ENCODE measurements at regions of chr20 and their contacts with region 1.

Region 1: DNA sequence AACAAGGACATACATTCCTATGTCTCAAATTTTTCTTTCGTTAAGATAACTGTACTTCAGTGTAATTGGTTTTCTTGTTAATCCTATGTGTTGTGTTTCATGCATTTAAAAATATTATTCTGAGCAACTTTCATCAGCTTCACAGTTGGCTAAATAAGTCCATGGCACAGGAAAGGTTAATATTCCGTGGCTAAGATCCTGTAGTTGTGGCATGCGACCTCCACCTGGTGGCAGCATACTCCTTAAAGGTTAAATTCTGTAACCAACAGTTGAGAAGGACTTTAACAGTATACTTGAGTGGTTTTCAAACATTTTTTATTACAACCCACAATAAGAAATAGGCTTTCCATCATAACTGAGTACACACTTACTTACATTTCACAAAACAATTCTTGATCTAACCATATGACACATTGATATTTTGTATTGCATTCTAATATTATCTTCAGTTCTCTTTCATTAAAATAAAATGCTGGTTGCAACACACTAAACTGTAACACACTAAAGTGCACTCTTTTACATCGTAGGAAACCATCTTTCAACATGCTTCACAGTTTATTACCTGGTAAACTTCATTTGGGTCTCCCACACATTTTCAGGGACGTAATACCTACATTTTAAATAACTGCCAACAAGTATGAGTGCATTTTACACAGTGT is 118.3 kb downstream of the SLX4IP start:
- DNase-seq: peak; percentile 55
- H3K4me3 ChIP-seq: no peak overlapping the region
- H3K27ac ChIP-seq: no peak overlapping the region
- H3K4me1 ChIP-seq: no peaks in the 10 kb centered on the region
- CTCF ChIP-seq: peak; percentile 92

Region 2: DNA sequence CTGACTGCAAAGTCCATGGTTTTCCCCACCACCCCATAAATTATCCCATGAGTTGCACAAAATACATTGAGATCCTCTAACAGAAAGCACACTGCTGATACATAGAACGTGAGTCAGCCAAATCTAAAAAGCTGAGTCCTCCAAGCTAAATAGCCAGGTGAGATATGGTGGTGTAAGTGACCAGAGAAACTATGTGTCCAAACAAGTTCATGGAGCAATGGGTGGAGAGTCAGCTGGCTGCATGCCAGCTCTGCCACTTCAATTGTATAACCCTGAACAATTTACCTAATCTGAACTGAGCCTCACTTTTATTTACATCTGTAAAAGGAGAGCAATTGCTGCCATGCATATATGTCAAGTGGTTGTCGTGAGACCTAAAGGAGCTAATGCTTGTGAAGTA is 325.1 kb before region 1 on chr20:
- CTCF ChIA-PET with region 1: no interaction called
- POLR2A ChIA-PET with region 1: no interaction called
- intact Hi-C with region 1: no loop called
- DNase-seq: no peak
- H3K4me3 ChIP-seq: no peak overlapping the region
- H3K27ac ChIP-seq: no peak overlapping the region
- H3K4me1 ChIP-seq: no peaks in the 10 kb centered on the region
- CTCF ChIP-seq: no peak

Region 3: GRCh38 chr20:10970109-10970508 is 416.7 kb after region 1 on chr20:
- CTCF ChIA-PET with region 1: no interaction called
- POLR2A ChIA-PET with region 1: no interaction called
- intact Hi-C with region 1: no loop called
- DNase-seq: no peak
- H3K4me3 ChIP-seq: no peak overlapping the region
- H3K27ac ChIP-seq: no peak overlapping the region
- H3K4me1 ChIP-seq: no peaks in the 10 kb centered on the region
- CTCF ChIP-seq: no peak

Region 4: DNA sequence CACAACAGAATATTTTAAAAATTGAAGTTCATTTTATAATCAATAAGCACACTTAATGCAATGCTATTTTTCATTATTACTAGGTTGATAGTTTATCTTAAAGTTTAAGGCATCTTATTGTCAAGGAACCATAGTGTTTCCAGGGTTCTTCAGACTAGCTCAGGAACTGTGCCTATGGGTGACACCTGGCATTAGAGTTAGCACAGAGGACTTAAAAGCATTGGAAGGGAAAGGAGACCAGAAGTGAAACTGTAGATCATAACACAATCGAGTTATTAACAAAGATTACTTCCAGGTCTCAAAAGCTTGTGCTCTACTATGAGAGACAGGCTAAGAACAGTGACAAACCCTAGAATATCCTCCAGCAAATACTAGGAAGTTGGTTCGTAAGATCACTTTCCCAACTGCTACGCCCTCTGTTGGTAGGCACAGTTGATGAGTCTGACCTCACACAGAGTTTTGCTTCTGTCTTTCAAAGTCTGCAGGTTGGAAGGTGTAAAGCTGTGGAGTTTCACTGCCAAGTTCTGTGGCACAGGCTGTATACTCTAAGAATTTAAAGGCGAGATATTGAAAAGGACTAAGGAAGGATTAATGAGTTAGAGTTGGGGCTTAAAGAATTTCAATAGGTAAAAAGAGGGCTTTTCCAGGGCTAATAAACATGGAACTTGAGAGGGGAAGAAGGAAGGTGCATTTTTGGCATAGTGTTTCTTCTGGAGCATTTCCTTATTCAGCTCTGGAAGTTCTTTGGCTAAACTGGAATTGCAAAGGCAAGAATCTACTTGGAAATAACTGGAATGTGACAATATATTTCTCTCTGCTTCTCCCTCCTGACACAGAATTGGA is 651.7 kb after region 1 on chr20:
- CTCF ChIA-PET with region 1: no interaction called
- POLR2A ChIA-PET with region 1: no interaction called
- intact Hi-C with region 1: loop called (anchors 10 kb)
- DNase-seq: peak; percentile 50
- H3K4me3 ChIP-seq: no peak overlapping the region
- H3K27ac ChIP-seq: no peak overlapping the region
- H3K4me1 ChIP-seq: no peaks in the 10 kb centered on the region
- CTCF ChIP-seq: peak; percentile 84

Measured in OCI-LY7 (cell line).